CD8-positive, alpha-beta T cell (primary cell): ENCODE measurements at regions of chr13 and their contacts with region 1.

Region 1: DNA sequence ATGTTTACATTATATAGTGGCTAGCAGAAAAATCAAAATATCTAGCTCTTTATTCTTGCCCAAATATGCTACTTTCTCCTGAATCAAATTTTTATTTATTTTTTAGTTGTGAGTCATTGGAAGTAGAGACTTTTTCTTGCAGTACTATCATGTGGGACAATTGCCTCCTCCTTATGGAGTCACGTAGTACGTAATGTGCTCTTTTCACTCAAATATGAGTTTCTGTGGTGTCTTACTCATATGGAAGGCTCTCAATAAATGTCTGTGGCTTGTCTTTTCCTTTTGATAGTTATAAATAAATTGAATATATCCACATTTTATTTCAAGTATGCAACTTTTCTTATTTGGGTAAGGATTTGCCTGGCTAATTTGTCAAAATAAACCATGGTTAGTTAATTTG is 1411.0 kb upstream of the SLC10A2 start:
- DNase-seq: no peak
- ATAC-seq: no peak
- H3K4me3 ChIP-seq: no peak overlapping the region
- H3K4me3 Mint-ChIP-seq: no peak overlapping the region
- H3K27ac ChIP-seq: no peak overlapping the region
- H3K27ac Mint-ChIP-seq: no peak overlapping the region
- H3K4me1 ChIP-seq: no peaks in the 10 kb centered on the region
- H3K4me1 Mint-ChIP-seq: no peaks in the 10 kb centered on the region
- H3K27me3 ChIP-seq: no peaks in the 10 kb centered on the region
- H3K27me3 Mint-ChIP-seq: no peaks in the 10 kb centered on the region
- CTCF ChIP-seq: no peak

Region 2: GRCh38 chr13:104465996-104466395 is 11.3 kb before region 1 on chr13:
- CTCF ChIA-PET with region 1: no interaction called
- POLR2A ChIA-PET with region 1: no interaction called
- intact Hi-C with region 1: loop called in 1 of 2 experiments (anchors 1 kb)
- DNase-seq: no peak
- ATAC-seq: no peak
- H3K4me3 ChIP-seq: no peak overlapping the region
- H3K4me3 Mint-ChIP-seq: no peak overlapping the region
- H3K27ac ChIP-seq: no peak overlapping the region
- H3K27ac Mint-ChIP-seq: no peak overlapping the region
- H3K4me1 ChIP-seq: no peaks in the 10 kb centered on the region
- H3K4me1 Mint-ChIP-seq: no peaks in the 10 kb centered on the region
- H3K27me3 ChIP-seq: no peaks in the 10 kb centered on the region
- H3K27me3 Mint-ChIP-seq: no peaks in the 10 kb centered on the region
- CTCF ChIP-seq: no peak

Region 3: DNA sequence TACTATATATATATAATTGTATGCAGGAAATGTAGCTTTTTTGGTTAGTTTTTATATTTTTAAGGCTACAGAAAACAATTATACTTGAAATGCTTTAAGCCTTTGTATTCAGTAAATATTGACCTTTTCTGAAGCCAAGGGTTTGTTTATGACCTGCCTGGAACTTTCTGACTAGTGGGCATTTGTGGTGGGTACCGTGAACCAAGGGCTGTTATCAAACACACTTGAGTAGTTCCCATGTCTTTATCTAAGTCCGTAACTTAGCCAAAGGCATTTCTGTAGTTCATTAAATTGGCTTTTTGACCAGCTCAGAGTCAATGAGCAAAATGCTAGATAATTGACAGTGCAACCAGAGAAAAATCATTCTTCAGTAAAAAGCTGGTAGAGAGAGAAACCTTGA is 33.2 kb after region 1 on chr13:
- CTCF ChIA-PET with region 1: no interaction called
- POLR2A ChIA-PET with region 1: no interaction called
- intact Hi-C with region 1: loop called in 1 of 2 experiments (anchors 1 kb)
- DNase-seq: no peak
- ATAC-seq: no peak
- H3K4me3 ChIP-seq: no peak overlapping the region
- H3K4me3 Mint-ChIP-seq: no peak overlapping the region
- H3K27ac ChIP-seq: no peak overlapping the region
- H3K27ac Mint-ChIP-seq: no peak overlapping the region
- H3K4me1 ChIP-seq: no peaks in the 10 kb centered on the region
- H3K4me1 Mint-ChIP-seq: no peaks in the 10 kb centered on the region
- H3K27me3 ChIP-seq: no peaks in the 10 kb centered on the region
- H3K27me3 Mint-ChIP-seq: no peaks in the 10 kb centered on the region
- CTCF ChIP-seq: no peak